ENCODE measurements at regions of chr21 and their contacts with region 1.

Region 1: GRCh38 chr21:16071092-16071491 is 341.3 kb downstream of the USP25 start:
- DNase-seq: no peak
- CTCF ChIP-seq: no peak

Region 2: DNA sequence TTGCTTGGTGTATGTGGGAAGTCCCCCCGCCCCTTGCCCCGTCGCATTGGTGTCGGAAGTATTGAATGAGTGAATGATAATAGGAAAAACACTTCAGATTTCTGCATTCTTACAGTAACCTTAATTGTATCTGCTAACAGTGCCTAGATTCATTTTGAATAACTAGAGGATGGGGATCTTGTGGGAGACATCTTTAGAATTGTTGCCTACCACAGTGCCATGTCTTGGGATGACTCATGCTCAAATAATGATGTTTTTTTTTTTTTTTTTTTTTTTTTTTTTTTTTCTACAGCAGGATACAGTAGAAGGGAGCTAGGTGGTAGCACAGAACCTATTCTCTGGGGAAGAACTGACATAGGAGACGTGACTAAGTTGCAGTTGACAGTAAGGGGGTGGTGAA is 103.4 kb before region 1 on chr21:
- in situ Hi-C with region 1: loop called (anchors 25 kb)
- DNase-seq: no peak
- CTCF ChIP-seq: no peak

Region 3: GRCh38 chr21:15986277-15986676 is 84.8 kb before region 1 on chr21:
- in situ Hi-C with region 1: no loop called
- DNase-seq: no peak
- CTCF ChIP-seq: no peak

Measured in GM13976 (cell line).